PC-3 (cell line): ENCODE measurements at regions of chr3 and their contacts with region 1.

Region 1: GRCh38 chr3:101635954-101636798 is 40.8 kb downstream of the ZBTB11 start:
- DNase-seq: peak; percentile 69
- ATAC-seq: peak; percentile 85
- H3K4me3 ChIP-seq: no peak overlapping the region
- H3K27ac ChIP-seq: no peak overlapping the region
- H3K4me1 ChIP-seq: no peaks in the 10 kb centered on the region
- H3K27me3 ChIP-seq: no peaks in the 10 kb centered on the region
- CTCF ChIP-seq: peak; percentile 81

Region 2: GRCh38 chr3:101414121-101414520 is 222.1 kb before region 1 on chr3:
- CTCF ChIA-PET with region 1: no interaction called
- POLR2A ChIA-PET with region 1: no interaction called
- intact Hi-C with region 1: loop called (anchors 10 kb)
- DNase-seq: no peak
- ATAC-seq: no peak
- H3K4me3 ChIP-seq: no peak overlapping the region
- H3K27ac ChIP-seq: no peak overlapping the region
- H3K4me1 ChIP-seq: no peaks in the 10 kb centered on the region
- H3K27me3 ChIP-seq: no peaks in the 10 kb centered on the region
- CTCF ChIP-seq: no peak

Region 3: GRCh38 chr3:101573449-101574387 is 62.5 kb before region 1 on chr3 and contains the start of gene PCNP:
- CTCF ChIA-PET with region 1: no interaction called
- POLR2A ChIA-PET with region 1: no interaction called
- intact Hi-C with region 1: loop called (anchors 1 kb)
- DNase-seq: peak; percentile 99
- ATAC-seq: peak; percentile 82
- H3K4me3 ChIP-seq: peak within 1 kb of the TSS; percentile 95
- H3K27ac ChIP-seq: peak within 1 kb of the TSS; percentile 85
- H3K4me1 ChIP-seq: peaks cover 19% of the 10 kb centered on the region
- H3K27me3 ChIP-seq: no peaks in the 10 kb centered on the region
- CTCF ChIP-seq: peak; percentile 97
- total RNA-seq, gene PCNP: 71.1 and 72.3 TPM in 2 replicates

Region 4: DNA sequence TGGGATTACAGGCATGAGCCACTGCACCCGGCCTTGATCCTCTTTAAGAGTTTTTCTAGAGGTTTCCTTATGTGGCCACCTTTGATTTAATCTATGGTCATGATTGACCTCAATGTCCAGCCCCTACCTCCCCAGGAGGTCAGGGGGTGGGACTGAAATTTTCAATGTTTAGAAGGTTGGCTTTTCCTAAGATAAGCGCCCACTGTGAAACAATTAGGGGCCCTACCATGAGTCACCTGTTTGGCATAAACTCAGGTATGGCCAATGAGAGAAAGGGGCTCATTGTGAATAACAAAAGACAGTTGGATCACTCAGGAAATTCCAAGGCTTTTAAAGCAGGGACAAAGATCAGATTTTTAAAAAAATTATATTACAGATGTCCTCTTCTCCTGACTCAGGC is 10.3 kb before region 1 on chr3:
- CTCF ChIA-PET with region 1: no interaction called
- POLR2A ChIA-PET with region 1: interaction called, 10 read pairs
- intact Hi-C with region 1: no loop called
- DNase-seq: no peak
- ATAC-seq: no peak
- H3K4me3 ChIP-seq: no peak overlapping the region
- H3K27ac ChIP-seq: no peak overlapping the region
- H3K4me1 ChIP-seq: no peaks in the 10 kb centered on the region
- H3K27me3 ChIP-seq: no peaks in the 10 kb centered on the region
- CTCF ChIP-seq: no peak

Region 5: DNA sequence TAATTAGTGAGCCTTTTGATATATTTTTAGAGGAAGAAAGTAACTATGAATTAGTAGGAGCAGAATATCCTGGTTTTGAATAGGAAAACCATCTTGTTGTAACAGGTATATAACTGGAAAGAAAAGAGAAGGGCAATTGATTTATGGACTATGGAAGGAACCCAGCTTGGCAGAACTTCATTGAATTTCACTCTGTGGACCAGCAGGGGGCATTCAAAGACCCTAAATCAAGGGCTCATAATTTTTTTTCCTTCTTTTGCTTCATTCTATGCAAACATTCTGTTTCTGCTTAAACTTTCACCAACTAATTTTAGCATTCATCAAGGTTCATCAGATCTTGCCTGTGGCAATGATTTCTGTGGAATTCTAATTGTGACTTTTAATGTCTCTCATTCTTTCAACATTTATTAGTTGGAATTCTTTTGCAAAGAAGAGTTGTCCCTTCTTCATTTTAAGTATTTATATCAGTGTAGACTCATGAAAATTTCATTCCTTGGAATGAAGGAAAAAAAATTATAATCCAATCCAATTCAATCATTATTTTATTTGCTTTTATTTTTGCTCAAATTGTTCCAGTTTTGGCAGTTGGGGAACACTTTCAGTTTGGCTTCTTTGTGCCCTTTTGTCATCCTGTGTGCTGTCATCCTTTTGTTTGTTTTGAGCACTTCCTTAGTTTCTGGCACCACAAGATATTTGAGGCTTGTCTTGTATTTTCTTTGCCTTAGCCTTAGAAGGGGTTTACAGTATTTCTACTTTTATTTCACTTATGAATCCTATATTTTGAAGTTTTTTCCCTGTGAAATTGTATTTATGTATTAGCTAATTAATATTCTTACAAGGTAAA is 173.2 kb after region 1 on chr3:
- CTCF ChIA-PET with region 1: no interaction called
- POLR2A ChIA-PET with region 1: no interaction called
- intact Hi-C with region 1: no loop called
- DNase-seq: peak; percentile 74
- ATAC-seq: peak; percentile 78
- H3K4me3 ChIP-seq: no peak overlapping the region
- H3K27ac ChIP-seq: peak overlapping the region; percentile 58
- H3K4me1 ChIP-seq: peaks cover 19% of the 10 kb centered on the region
- H3K27me3 ChIP-seq: no peaks in the 10 kb centered on the region
- CTCF ChIP-seq: peak; percentile 93

Region 6: GRCh38 chr3:102238357-102238756 is 602.2 kb after region 1 on chr3:
- CTCF ChIA-PET with region 1: no interaction called
- POLR2A ChIA-PET with region 1: no interaction called
- intact Hi-C with region 1: no loop called
- DNase-seq: peak; percentile 97
- ATAC-seq: peak; percentile 93
- H3K4me3 ChIP-seq: no peak overlapping the region; the same call in 1 of the 2 replicates
- H3K27ac ChIP-seq: peak overlapping the region; percentile 92
- H3K4me1 ChIP-seq: peaks cover 54% of the 10 kb centered on the region
- H3K27me3 ChIP-seq: no peaks in the 10 kb centered on the region
- CTCF ChIP-seq: no peak